Activated T-helper 2 cell treated with anti-CD3 and anti-CD28 coated beads, Interferon-gamma antibody, Interleukin-2, Interleukin-4, amounts not matched to agents 10 μg/mL and 5 μg/mL and 100 μg/mL, durations not matched to agents 14 hours and 24 hours and 36 hours (primary cell): ENCODE measurements at regions of chr3 and their contacts with region 1.

Region 1: DNA sequence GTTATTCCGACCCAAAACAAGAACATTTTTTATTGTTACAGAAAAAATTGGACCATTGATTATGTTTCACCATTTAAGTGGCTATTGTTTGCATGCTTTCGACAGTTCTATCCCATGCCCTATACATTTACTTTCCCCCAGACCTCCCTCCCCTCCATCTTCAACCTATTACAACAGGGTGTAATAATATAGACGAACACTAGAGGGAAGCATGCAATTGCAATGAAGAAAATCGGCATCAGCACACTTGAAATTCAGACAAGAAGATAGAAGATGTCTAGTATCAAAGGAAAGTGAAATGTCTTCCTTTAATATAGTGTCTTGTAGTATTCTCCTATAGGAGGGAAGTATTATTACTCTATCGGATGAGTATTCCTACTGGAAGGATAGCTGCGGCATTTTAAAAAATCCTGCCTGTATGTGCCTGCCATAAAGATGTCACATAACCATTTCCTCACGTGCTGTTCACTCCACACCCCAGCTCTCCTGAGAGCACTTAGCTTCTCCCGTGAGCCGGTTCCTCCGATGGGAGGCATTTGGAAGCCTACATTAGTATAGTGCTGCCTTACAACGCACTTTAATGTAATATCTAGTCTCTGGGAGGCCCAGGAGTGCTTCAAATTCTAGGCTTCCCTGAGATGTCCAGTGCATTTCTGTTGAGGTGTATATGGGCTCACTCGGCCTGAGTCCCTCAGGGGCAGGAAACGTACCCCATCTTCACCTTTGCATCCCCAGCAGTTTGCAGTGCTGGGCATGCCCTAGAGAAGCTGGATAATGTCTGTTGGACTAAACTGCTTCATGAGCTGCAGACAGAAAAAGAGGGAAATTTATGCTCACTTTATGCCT is 17.8 kb upstream of the ERICH6 start:
- DNase-seq: no peak
- H3K4me3 Mint-ChIP-seq: no peak overlapping the region
- H3K27ac Mint-ChIP-seq: no peak overlapping the region
- H3K4me1 Mint-ChIP-seq: peaks cover 36% of the 10 kb centered on the region
- H3K27me3 Mint-ChIP-seq: no peaks in the 10 kb centered on the region

Region 2: GRCh38 chr3:150528354-150528797 is 193.1 kb before region 1 on chr3:
- intact Hi-C with region 1: loop called (anchors 5 kb)
- DNase-seq: no peak
- H3K4me3 Mint-ChIP-seq: no peak overlapping the region
- H3K27ac Mint-ChIP-seq: no peak overlapping the region
- H3K4me1 Mint-ChIP-seq: peaks cover 6% of the 10 kb centered on the region
- H3K27me3 Mint-ChIP-seq: peaks cover 19% of the 10 kb centered on the region

Region 3: DNA sequence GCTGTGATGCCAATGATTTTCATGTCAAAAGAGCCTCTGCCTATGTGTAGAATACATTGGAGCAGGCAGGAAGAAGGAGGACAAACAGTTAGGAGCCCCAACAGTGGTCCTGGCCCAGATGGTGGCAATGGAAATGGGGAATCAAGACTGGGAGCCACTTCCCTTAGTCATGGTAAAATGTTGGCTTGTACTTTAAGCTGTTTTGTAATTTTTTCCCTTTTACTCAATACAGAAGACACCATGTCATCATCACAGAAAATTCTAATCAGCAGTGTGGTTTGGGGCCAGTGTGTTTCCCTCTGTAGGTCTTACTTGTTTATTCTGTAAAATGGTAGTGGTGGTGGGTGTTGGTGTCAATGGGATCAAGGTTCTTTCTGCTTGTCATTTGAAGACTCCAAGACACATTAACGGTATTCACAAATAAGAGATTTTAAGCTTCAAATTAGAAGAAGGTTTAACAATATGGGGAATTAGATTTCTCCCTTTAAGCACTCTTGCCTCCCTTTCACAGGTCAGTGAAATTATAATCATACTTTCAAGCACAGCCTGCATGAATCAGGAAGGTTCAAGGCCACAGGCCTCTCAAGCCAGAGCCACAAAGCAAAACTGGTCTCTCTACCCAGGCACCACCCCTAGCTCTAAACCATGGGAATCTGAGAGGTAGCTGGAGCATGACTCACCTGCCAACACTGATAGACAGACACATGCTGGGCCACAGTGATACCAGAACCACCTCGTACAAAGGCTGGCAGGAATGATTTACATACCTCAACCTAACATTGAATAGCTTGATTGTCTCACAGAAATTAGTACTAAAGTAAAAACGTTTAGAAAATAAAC is 16.6 kb after region 1 on chr3:
- intact Hi-C with region 1: loop called (anchors 1 kb)
- DNase-seq: no peak
- H3K4me3 Mint-ChIP-seq: peak overlapping the region; percentile 53
- H3K27ac Mint-ChIP-seq: peak overlapping the region; percentile 100
- H3K4me1 Mint-ChIP-seq: peaks cover 91% of the 10 kb centered on the region
- H3K27me3 Mint-ChIP-seq: no peaks in the 10 kb centered on the region

Region 4: GRCh38 chr3:150787741-150788370 is 66.3 kb after region 1 on chr3:
- intact Hi-C with region 1: loop called (anchors 1 kb)
- DNase-seq: peak; percentile 59
- H3K4me3 Mint-ChIP-seq: no peak overlapping the region
- H3K27ac Mint-ChIP-seq: no peak overlapping the region
- H3K4me1 Mint-ChIP-seq: peaks cover 41% of the 10 kb centered on the region
- H3K27me3 Mint-ChIP-seq: peaks cover 2% of the 10 kb centered on the region

Region 5: GRCh38 chr3:150806185-150806835 is 84.8 kb after region 1 on chr3:
- intact Hi-C with region 1: no loop called
- DNase-seq: no peak
- H3K4me3 Mint-ChIP-seq: no peak overlapping the region
- H3K27ac Mint-ChIP-seq: no peak overlapping the region
- H3K4me1 Mint-ChIP-seq: no peaks in the 10 kb centered on the region
- H3K27me3 Mint-ChIP-seq: peaks cover 23% of the 10 kb centered on the region

Region 6: DNA sequence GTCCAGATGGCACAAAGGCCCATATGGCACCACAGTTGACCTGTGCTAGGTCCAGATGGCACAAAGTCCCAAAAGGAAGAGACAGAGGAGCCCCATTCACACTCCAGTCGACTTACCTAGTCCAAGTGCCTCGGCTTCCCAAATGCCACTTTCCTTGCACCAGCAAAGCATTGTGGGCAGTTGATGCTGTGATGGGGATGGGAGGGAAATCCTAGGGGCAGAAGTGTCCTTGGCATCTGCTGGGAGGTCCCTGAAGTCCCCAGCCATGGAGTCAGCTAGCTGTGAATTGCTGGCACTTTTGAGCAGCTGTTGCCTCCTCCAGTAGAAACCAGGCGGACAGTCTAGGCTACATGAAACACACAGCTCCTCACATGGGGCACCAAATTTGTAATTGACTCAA is 101.8 kb after region 1 on chr3:
- intact Hi-C with region 1: no loop called
- DNase-seq: no peak
- H3K4me3 Mint-ChIP-seq: no peak overlapping the region
- H3K27ac Mint-ChIP-seq: no peak overlapping the region
- H3K4me1 Mint-ChIP-seq: no peaks in the 10 kb centered on the region
- H3K27me3 Mint-ChIP-seq: peaks cover 6% of the 10 kb centered on the region

Region 7: GRCh38 chr3:150870396-150870795 is 148.9 kb after region 1 on chr3:
- intact Hi-C with region 1: loop called (anchors 1 kb)
- DNase-seq: no peak
- H3K4me3 Mint-ChIP-seq: no peak overlapping the region
- H3K27ac Mint-ChIP-seq: no peak overlapping the region
- H3K4me1 Mint-ChIP-seq: peaks cover 11% of the 10 kb centered on the region
- H3K27me3 Mint-ChIP-seq: peaks cover 3% of the 10 kb centered on the region

Region 8: DNA sequence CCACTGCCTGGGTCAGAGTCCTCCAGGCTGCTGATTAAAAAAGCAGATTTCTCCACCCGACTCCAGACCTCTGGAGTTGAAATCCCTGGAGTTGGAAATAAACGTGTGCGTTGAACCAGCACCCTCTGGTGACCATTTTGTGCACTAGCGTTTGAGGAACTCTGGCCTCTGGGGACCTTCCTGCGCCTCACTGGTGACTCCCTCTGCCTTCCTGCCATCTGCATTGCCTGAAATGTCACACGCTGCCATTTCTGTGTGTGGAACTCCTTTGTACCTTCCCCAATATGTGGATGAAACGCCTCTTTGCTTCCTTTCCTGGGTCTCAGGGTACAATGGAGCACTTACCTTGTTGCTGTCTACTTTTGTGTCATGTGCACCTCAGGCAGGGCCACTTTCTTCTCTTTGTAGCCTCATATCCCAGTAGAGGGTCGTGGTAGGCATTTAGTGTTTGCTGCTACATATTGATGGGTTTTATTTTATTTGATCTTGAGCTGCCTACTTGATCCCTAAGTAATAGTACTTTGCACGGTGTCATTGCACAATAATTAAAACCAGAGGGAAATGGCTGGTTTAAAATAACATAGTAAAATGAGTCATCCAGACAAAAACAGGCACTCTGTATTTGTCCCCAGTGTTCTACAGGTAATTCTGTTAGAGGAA is 424.7 kb after region 1 on chr3:
- intact Hi-C with region 1: loop called (anchors 5 kb)
- DNase-seq: peak; percentile 37
- H3K4me3 Mint-ChIP-seq: no peak overlapping the region
- H3K27ac Mint-ChIP-seq: no peak overlapping the region
- H3K4me1 Mint-ChIP-seq: peaks cover 8% of the 10 kb centered on the region
- H3K27me3 Mint-ChIP-seq: peaks cover 3% of the 10 kb centered on the region